ENCODE measurements at regions of chr12 and their contacts with region 1.

Region 1: GRCh38 chr12:98572010-98572409 is 21.5 kb upstream of the SLC25A3 start:
- DNase-seq: no peak
- H3K4me3 ChIP-seq: no peak overlapping the region
- H3K27ac ChIP-seq: no peak overlapping the region
- H3K4me1 ChIP-seq: no peaks in the 10 kb centered on the region
- H3K27me3 ChIP-seq: no peaks in the 10 kb centered on the region
- CTCF ChIP-seq: peak; percentile 19 to 39
- POLR2A ChIP-seq: no peak

Region 2: DNA sequence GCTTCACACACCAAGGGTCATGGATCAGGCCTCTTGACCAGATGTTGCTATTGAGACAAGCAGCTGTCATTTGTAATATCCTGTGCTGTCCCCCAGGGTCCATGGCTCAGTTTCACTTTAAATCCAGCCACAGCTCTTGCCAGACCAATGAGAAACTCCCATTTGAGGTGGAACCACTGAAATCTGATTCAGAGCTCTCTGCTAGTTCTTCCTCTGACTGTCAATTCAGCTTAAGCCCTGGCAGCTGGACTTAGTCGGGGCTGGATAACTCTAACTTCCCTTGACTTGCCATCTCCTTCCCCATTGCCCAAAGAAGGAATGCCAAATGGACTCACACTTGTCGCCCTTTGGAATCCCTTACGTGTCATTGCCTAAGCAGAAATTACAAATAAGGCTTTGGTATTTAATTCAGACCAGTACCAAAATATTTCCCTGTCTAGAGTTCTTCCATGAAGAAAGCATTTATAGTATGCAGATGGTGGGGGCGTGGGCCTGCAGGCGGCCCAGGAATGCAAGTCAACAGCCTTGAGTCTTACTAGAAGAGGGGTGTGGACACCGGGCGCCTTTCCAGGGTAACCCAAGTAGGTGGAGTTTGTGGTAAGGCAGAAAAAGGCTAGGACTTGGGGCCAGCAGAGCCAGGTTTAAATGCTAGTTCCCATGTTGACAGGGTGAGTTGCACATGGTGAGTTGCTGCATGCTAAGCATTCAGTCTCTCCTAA is 153.5 kb before region 1 on chr12:
- CTCF ChIA-PET with region 1: interaction called, 11 read pairs
- POLR2A ChIA-PET with region 1: no interaction called
- dilution Hi-C with region 1: no loop called
- intact Hi-C with region 1: no loop called
- DNase-seq: peak; percentile 51
- H3K4me3 ChIP-seq: no peak overlapping the region
- H3K27ac ChIP-seq: no peak overlapping the region
- H3K4me1 ChIP-seq: peaks cover 2% of the 10 kb centered on the region
- H3K27me3 ChIP-seq: no peaks in the 10 kb centered on the region
- CTCF ChIP-seq: no peak
- POLR2A ChIP-seq: no peak

Region 3: DNA sequence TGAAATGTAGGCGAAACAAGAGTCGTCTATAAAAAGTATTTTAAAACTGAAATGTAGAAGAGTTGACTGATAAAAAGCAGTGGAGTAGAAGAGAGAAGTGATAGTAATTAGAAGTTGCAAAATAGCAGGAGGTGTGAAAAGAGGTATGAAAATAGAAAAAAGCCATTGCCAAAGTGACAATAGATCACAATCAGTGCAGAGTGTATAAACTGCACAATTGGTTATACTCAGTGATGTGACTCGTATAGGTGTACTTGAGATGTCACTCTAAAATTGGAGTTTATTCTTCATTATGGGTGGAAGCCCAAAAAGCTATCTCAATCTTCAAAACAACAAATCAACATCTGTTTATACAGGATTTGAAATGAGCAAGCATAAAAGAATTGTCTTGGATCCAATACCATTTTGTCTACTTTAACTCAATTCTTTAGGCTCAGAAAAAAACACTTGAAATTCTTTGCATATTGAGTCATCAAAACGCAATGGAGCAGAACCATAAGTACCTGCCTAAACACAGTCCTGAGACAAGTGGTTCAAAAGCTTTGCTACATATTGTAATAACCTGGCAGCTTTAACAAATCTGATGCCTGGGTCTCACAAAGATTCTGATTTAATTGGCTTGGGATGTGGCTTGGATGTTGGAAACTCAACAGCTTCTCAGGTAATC is 63.8 kb after region 1 on chr12:
- CTCF ChIA-PET with region 1: interaction called, 11 read pairs
- POLR2A ChIA-PET with region 1: no interaction called
- dilution Hi-C with region 1: no loop called
- intact Hi-C with region 1: no loop called
- DNase-seq: peak; percentile 61
- H3K4me3 ChIP-seq: no peak overlapping the region
- H3K27ac ChIP-seq: peak overlapping the region; percentile 10
- H3K4me1 ChIP-seq: peaks cover 27% of the 10 kb centered on the region
- H3K27me3 ChIP-seq: no peaks in the 10 kb centered on the region
- CTCF ChIP-seq: no peak
- POLR2A ChIP-seq: no peak

Region 4: GRCh38 chr12:98653866-98654493 is 82.0 kb after region 1 on chr12:
- CTCF ChIA-PET with region 1: interaction called, 96 read pairs
- POLR2A ChIA-PET with region 1: interaction called, 4 read pairs
- dilution Hi-C with region 1: no loop called
- intact Hi-C with region 1: loop called (anchors 1 kb)
- DNase-seq: peak; percentile 66
- H3K4me3 ChIP-seq: no peak overlapping the region
- H3K27ac ChIP-seq: no peak overlapping the region
- H3K4me1 ChIP-seq: peaks cover 4% of the 10 kb centered on the region
- H3K27me3 ChIP-seq: no peaks in the 10 kb centered on the region
- CTCF ChIP-seq: peak; percentile 30 to 36
- POLR2A ChIP-seq: no peak

Region 5: GRCh38 chr12:98998697-98999299 is 426.8 kb after region 1 on chr12:
- CTCF ChIA-PET with region 1: interaction called, 56 read pairs
- POLR2A ChIA-PET with region 1: no interaction called
- dilution Hi-C with region 1: no loop called
- intact Hi-C with region 1: no loop called
- DNase-seq: peak; percentile 49
- H3K4me3 ChIP-seq: no peak overlapping the region
- H3K27ac ChIP-seq: no peak overlapping the region
- H3K4me1 ChIP-seq: no peaks in the 10 kb centered on the region
- H3K27me3 ChIP-seq: peaks cover 0 to 2% of the 10 kb centered on the region in 2 experiments
- CTCF ChIP-seq: peak; percentile 37 to 45
- POLR2A ChIP-seq: no peak

Measured in endothelial cell of umbilical vein (primary cell).